B cell (primary cell): ENCODE measurements at regions of chr1 and their contacts with region 1.

Region 1: GRCh38 chr1:22025368-22026155 is 24.1 kb downstream of the CELA3A start:
- DNase-seq: peak; percentile 93
- ATAC-seq: peak; percentile 76
- H3K4me3 ChIP-seq: peak overlapping the region; percentile 85 to 99 (median 94)
- H3K4me3 Mint-ChIP-seq: peak overlapping the region; percentile 96
- H3K27ac ChIP-seq: peak overlapping the region; percentile 98
- H3K27ac Mint-ChIP-seq: peak overlapping the region; percentile 98
- H3K4me1 ChIP-seq: peaks cover 17 to 38% of the 10 kb centered on the region in 2 donors
- H3K4me1 Mint-ChIP-seq: peaks cover 43% of the 10 kb centered on the region
- H3K27me3 ChIP-seq: no peaks in the 10 kb centered on the region
- H3K27me3 Mint-ChIP-seq: no peaks in the 10 kb centered on the region
- CTCF ChIP-seq: no peak

Region 2: DNA sequence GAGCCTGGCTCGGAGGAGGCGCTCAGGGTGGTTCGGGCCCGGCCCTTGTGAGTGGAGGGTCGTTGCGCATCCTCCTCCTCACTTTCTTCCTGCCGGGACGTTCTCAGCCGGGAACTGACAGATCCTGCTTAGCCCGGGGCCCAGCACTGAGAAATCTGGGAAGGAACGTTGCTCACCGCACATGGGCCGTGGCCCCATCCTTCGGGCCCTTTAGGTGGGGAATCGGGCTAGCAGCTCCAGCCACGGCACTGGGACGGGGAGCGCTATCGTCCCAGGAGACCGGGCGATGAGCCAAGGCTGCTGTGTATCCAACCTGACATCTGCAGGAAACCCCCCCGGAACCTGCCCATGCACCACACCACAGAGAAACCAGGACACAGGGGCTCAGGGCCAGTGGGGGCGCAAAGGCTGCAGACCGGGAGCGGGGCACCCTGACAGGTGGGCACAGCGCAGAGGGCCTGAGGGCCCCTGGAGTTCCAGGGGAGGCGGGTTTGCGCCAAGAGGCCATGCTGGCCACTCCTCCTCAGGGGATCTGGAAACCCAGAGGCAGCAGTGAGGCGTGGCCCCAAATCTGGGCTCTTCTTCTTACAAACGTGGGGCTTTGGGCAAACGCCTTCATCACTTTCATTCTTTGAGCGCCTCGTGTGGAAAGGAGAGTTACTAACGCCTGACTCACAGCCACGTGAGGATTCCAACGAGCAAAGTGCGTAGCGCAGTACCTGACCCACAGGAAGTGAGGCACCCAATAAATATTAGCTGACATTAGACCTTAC is 1292.8 kb before region 1 on chr1 and contains the start of gene SH2D5:
- CTCF ChIA-PET with region 1: no interaction called
- POLR2A ChIA-PET with region 1: interaction called, 10 read pairs
- intact Hi-C with region 1: no loop called
- DNase-seq: peak; percentile 84
- ATAC-seq: peak; percentile 70
- H3K4me3 ChIP-seq: peak within 1 kb of the TSS; percentile 22 to 70 (median 60)
- H3K4me3 Mint-ChIP-seq: peak within 1 kb of the TSS; percentile 94
- H3K27ac ChIP-seq: no peak within 1 kb of the TSS
- H3K27ac Mint-ChIP-seq: peak within 1 kb of the TSS; percentile 86
- H3K4me1 ChIP-seq: peaks cover 27 to 30% of the 10 kb centered on the region in 2 donors
- H3K4me1 Mint-ChIP-seq: peaks cover 19% of the 10 kb centered on the region
- H3K27me3 ChIP-seq: peaks cover 0 to 35% (median 13%) of the 10 kb centered on the region in 4 experiments
- H3K27me3 Mint-ChIP-seq: peaks cover 13% of the 10 kb centered on the region
- CTCF ChIP-seq: peak; percentile 62
- total RNA-seq, gene SH2D5: 0.29 and 0.30 TPM in 2 replicates

Region 3: DNA sequence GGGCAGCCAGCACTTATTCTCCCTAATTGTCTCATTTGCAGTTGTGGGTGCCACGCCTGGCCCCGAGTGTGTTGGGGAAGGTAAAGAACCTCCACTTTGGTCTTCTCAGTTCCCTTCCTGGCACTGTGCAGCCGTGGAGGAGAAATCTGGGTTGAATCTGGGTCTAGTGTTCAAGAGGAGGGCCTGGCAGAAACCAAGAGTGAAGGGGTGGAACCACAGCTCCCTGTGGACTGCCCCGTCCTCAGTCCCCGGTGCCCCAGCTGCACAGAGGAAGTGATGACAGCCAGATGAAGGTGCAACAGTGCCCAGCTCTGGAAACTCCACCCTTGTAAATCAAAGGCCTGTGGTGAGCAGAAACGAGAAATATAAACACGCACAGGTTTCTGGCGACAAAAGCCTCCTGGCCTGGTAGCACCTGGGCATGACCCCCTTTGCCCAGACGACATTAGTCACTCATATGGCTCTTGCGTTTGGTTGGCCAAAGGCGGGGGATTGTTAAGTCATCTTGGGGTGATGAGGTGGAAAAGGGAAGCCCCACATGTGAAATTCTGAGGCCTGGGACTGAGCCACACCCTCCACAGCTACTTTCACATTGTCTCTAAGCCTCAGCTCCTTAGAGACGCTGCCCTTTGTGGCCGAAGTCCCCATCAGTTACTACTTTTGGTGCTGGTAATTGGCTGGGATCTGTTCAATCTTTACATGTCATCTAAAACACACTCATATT is 731.1 kb before region 1 on chr1:
- CTCF ChIA-PET with region 1: no interaction called
- POLR2A ChIA-PET with region 1: no interaction called
- intact Hi-C with region 1: loop called (anchors 10 kb)
- DNase-seq: peak; percentile 97
- ATAC-seq: peak; percentile 71
- H3K4me3 ChIP-seq: peak overlapping the region; percentile 48 to 75 (median 61)
- H3K4me3 Mint-ChIP-seq: peak overlapping the region; percentile 87
- H3K27ac ChIP-seq: peak overlapping the region; percentile 96 to 99
- H3K27ac Mint-ChIP-seq: peak overlapping the region; percentile 95
- H3K4me1 ChIP-seq: peaks cover 77 to 90% of the 10 kb centered on the region in 2 donors
- H3K4me1 Mint-ChIP-seq: peaks cover 85% of the 10 kb centered on the region
- H3K27me3 ChIP-seq: no peaks in the 10 kb centered on the region
- H3K27me3 Mint-ChIP-seq: no peaks in the 10 kb centered on the region
- CTCF ChIP-seq: no peak

Region 4: GRCh38 chr1:22039594-22040285 is 14.2 kb after region 1 on chr1:
- CTCF ChIA-PET with region 1: interaction called, 61 read pairs
- POLR2A ChIA-PET with region 1: interaction called, 32 read pairs
- intact Hi-C with region 1: loop called (anchors 1 kb)
- DNase-seq: peak; percentile 96
- ATAC-seq: peak; percentile 99
- H3K4me3 ChIP-seq: peak overlapping the region; percentile 30 to 71 (median 52)
- H3K4me3 Mint-ChIP-seq: peak overlapping the region; percentile 87
- H3K27ac ChIP-seq: peak overlapping the region; percentile 98
- H3K27ac Mint-ChIP-seq: peak overlapping the region; percentile 98
- H3K4me1 ChIP-seq: peaks cover 42 to 60% of the 10 kb centered on the region in 2 donors
- H3K4me1 Mint-ChIP-seq: peaks cover 41% of the 10 kb centered on the region
- H3K27me3 ChIP-seq: no peaks in the 10 kb centered on the region
- H3K27me3 Mint-ChIP-seq: no peaks in the 10 kb centered on the region
- CTCF ChIP-seq: peak; percentile 8

Region 5: GRCh38 chr1:22057861-22058260 is 32.3 kb after region 1 on chr1:
- CTCF ChIA-PET with region 1: interaction called, 89 read pairs
- POLR2A ChIA-PET with region 1: interaction called, 87 read pairs
- intact Hi-C with region 1: no loop called
- DNase-seq: no peak
- ATAC-seq: no peak
- H3K4me3 ChIP-seq: no peak overlapping the region
- H3K4me3 Mint-ChIP-seq: no peak overlapping the region
- H3K27ac ChIP-seq: no peak overlapping the region
- H3K27ac Mint-ChIP-seq: no peak overlapping the region
- H3K4me1 ChIP-seq: peaks cover 71 to 72% of the 10 kb centered on the region in 2 donors
- H3K4me1 Mint-ChIP-seq: peaks cover 70% of the 10 kb centered on the region
- H3K27me3 ChIP-seq: no peaks in the 10 kb centered on the region
- H3K27me3 Mint-ChIP-seq: no peaks in the 10 kb centered on the region
- CTCF ChIP-seq: no peak

Region 6: GRCh38 chr1:22089787-22090186 is 64.2 kb after region 1 on chr1:
- CTCF ChIA-PET with region 1: interaction called, 13 read pairs
- POLR2A ChIA-PET with region 1: interaction called, 3 read pairs
- intact Hi-C with region 1: loop called (anchors 5 kb)
- DNase-seq: no peak
- ATAC-seq: no peak
- H3K4me3 ChIP-seq: peak overlapping the region in 2 of 5 experiments; percentile 13
- H3K4me3 Mint-ChIP-seq: peak overlapping the region; percentile 70
- H3K27ac ChIP-seq: peak overlapping the region; percentile 11 to 69
- H3K27ac Mint-ChIP-seq: peak overlapping the region; percentile 11
- H3K4me1 ChIP-seq: peaks cover 43 to 48% of the 10 kb centered on the region in 2 donors
- H3K4me1 Mint-ChIP-seq: peaks cover 74% of the 10 kb centered on the region
- H3K27me3 ChIP-seq: no peaks in the 10 kb centered on the region
- H3K27me3 Mint-ChIP-seq: no peaks in the 10 kb centered on the region
- CTCF ChIP-seq: no peak